ENCODE measurements at regions of chr17 and their contacts with region 1.

Region 1: DNA sequence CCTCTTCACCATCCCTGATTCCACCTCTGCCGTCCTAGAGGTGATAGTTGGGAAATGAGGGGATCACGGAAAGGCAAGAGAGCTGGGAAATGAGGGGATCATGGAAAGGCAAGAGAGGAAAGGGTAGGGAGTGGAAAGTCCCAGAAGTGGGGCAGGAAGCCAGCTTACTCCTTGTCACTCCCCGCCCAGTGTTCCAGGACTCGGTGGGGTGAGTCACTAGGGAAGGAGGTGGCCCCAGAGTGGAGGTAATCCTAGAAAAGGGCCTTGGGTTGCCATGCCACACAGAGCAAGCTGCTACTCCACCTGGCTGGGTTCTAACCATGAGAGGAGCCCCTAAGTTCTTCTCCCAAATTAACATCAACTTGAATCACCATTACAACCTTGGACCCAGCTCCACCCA is 14.8 kb downstream of the ALOXE3 start:
- DNase-seq: no peak
- H3K4me3 ChIP-seq: no peak overlapping the region
- H3K27ac ChIP-seq: no peak overlapping the region
- H3K27me3 ChIP-seq: peaks cover 12% of the 10 kb centered on the region
- CTCF ChIP-seq: no peak

Region 2: DNA sequence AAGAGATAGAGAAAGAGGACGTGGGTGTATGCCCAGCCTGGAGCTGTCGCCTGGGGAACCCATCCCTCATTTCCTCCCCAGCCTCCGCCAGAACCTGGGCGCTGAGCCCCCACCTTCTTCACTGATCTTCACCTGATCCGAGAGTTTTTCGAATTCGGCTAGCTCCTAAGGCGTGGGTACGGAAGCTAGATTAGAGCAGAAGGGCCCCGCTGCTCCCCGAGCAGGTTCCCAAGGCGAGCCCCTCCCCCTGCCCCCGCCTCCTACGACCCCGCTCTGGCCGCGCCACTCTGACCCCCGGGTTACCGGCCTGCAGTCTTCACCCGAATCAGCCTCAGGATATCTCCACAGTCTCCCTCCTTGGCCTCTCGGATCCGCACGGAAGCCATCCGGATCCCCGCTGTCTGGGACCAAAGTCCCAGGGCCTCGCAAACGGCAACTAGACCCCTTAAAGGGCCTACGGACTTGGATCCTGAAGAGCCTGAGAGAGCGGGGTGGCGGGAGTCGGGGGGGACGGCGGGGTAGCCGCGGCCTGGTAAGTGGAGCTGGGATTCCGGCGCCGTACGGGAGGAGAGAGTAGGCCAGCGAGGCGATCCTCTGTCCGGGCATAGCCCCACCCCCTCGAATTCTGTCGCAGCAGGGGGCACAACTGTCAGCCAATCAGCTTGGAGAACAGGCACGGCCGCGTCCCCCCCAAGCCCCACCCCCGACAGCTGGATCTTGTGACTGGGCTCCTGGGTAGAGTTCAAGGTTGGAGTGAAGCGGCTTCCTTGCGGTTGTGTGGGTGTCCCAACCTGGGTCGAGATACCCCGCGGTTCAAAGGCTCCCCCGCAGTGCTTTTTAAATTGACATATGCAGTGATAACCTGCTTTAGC is 476.1 kb before region 1 on chr17 and contains the start of gene SAT2:
- CTCF ChIA-PET with region 1: no interaction called
- POLR2A ChIA-PET with region 1: no interaction called
- DNase-seq: peak; percentile 86
- H3K4me3 ChIP-seq: peak within 1 kb of the TSS; percentile 86
- H3K27ac ChIP-seq: peak within 1 kb of the TSS; percentile 91
- H3K27me3 ChIP-seq: no peaks in the 10 kb centered on the region
- CTCF ChIP-seq: no peak
- polyA plus RNA-seq, gene SAT2: 54.1 and 61.5 TPM in 2 replicates

Region 3: GRCh38 chr17:7951143-7951803 is 152.3 kb before region 1 on chr17:
- CTCF ChIA-PET with region 1: no interaction called
- POLR2A ChIA-PET with region 1: no interaction called
- DNase-seq: no peak
- H3K4me3 ChIP-seq: no peak overlapping the region
- H3K27ac ChIP-seq: no peak overlapping the region
- H3K27me3 ChIP-seq: no peaks in the 10 kb centered on the region
- CTCF ChIP-seq: no peak

Region 4: DNA sequence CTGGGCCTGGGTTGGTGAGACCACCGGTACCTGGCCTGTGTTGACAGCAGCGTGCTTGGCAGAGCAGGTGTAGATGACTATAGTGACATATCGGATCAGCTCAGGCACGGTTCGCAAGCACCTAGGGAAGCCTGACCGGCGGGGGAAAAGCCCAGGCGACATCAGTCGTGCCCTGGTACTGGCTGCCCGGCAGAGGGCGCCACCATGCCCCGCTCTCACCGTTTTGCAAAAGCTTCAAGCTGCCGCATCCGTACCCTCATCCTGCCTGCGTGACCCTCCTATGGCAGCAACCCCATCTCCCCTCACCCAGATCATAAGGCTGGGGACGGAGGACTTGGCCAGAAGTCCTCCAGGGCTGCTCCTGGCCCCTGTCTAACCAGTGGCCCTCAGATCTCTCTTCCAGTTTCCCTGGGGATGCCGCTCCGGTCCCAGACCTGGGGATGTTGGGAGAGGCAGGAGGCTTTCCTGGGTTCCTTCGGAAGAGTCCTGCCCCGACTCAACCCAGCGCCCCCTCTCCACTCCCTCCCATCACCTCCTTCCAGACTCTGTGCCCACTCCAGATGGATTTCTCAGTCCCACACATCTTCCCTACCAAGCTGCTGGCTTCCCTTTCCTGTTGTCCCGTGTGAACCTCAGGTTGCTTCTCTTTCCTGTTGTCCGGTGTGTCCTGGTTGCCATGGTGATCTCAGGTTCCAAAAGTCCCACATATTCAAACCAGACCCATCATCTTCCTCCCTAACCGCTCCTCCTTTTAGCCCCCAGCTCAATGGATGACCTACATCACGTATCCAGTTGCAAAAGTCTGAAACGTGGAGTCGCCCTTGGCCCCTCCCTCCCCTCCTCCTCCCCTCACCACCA is 29.7 kb before region 1 on chr17:
- CTCF ChIA-PET with region 1: interaction called, 10 read pairs
- POLR2A ChIA-PET with region 1: no interaction called
- DNase-seq: no peak
- H3K4me3 ChIP-seq: no peak overlapping the region
- H3K27ac ChIP-seq: peak overlapping the region; percentile 11
- H3K27me3 ChIP-seq: peaks cover 72% of the 10 kb centered on the region
- CTCF ChIP-seq: peak; percentile 83

Region 5: DNA sequence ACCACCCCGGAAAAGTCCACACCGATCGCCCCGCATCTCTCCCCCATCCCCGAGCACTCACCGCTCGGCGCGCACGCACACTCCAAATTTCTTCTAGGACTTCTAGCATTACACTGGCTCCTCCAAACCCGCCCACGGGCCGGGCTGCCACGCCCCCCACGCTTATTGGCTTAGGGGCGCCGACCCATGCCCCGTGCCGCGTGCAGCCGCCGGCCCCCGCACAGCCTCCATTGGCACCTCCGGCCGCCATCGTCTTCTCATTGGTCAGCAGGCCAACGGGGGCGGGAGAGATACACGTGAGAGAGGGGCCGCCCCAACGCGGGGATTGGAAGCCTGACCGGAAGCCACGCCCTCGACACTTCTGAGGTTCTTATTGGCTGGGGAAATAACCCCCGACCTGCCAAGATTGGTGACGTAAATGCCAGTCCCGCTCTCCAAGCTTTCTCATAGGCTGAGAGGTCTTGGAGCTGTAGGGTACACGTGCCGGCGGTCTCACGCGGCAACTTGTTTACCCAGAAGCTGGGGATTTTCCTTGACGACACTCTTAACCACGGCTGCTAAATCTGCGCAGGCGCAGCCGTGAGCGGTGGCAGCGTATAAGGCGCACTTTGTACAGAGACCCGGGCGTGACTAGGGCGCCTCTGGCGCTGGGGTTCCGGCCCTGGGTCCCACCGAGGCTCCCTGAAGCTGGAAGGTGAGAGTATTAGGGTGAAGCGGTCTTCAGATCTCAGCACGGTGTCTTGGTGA is 52.9 kb after region 1 on chr17:
- CTCF ChIA-PET with region 1: no interaction called
- POLR2A ChIA-PET with region 1: no interaction called
- DNase-seq: peak; percentile 100
- H3K4me3 ChIP-seq: peak overlapping the region; percentile 72
- H3K27ac ChIP-seq: peak overlapping the region; percentile 97
- H3K27me3 ChIP-seq: no peaks in the 10 kb centered on the region
- CTCF ChIP-seq: no peak

Measured in AG04450 (cell line).